IMR-90 (cell line): ENCODE measurements at regions of chr16 and their contacts with region 1.

Region 1: GRCh38 chr16:19959736-19960135 is 75.1 kb upstream of the GPRC5B start:
- DNase-seq: no peak
- ATAC-seq: no peak
- H3K4me3 ChIP-seq: no peak overlapping the region
- H3K27ac ChIP-seq: no peak overlapping the region
- H3K4me1 ChIP-seq: no peaks in the 10 kb centered on the region
- H3K27me3 ChIP-seq: no peaks in the 10 kb centered on the region
- CTCF ChIP-seq: no peak
- POLR2A ChIP-seq: no peak
- RAD21 ChIP-seq: no peak

Region 2: DNA sequence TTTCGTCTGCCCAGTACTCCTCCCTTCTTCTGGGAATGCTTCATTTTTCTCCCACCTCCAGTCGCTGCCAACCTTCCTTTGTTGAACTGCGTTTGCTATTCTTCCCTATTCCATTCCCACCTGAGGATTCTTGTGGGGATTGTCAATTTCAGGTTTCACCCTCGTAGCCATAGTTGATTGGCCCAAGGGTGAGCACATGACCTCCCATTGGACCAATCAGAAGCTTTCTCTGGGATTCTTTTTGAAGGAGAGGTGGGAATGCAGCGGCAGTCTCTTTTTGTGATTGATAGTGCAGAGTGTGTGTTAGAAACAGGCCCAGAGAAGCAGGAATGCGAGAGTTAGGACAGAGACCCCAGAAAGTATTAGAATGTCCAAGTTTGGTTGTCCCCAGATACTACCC is 26.0 kb before region 1 on chr16:
- CTCF ChIA-PET with region 1: no interaction called
- POLR2A ChIA-PET with region 1: no interaction called
- dilution Hi-C with region 1: no loop called
- in situ Hi-C with region 1: no loop called
- intact Hi-C with region 1: loop called (anchors 1 kb)
- DNase-seq: no peak
- ATAC-seq: no peak
- H3K4me3 ChIP-seq: no peak overlapping the region
- H3K27ac ChIP-seq: no peak overlapping the region
- H3K4me1 ChIP-seq: no peaks in the 10 kb centered on the region
- H3K27me3 ChIP-seq: no peaks in the 10 kb centered on the region
- CTCF ChIP-seq: no peak
- POLR2A ChIP-seq: no peak
- RAD21 ChIP-seq: no peak